ENCODE measurements at regions of chr12 and their contacts with region 1.

Region 1: DNA sequence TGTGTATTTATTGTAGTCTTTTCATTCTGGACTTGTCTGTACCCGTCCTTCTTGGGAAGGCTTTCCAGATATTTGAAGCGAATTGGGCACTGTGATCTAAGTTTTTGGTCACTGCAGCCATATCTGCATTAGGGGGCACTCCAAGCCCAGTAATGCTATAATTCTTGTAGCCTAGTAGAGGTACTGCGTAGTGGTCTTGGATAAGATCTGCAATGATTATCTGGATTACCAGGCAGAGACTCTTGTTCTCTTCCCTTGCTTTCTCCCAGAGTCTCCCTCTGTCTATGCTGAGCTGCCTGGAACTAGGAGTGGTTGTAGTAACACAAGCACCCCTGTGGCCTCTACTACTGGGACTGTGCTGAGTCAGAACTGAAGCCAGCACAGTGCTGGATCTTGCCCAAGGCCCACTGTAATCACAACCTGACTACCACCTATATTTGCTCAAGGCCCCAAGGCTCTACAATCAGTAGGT is 30.0 kb downstream of the SLC38A2 start:
- DNase-seq: peak in 10 of 14 experiments; percentile 2 to 67 (median 24)
- ATAC-seq: peak; percentile 60
- H3K4me3 ChIP-seq: no peak overlapping the region
- H3K4me3 Mint-ChIP-seq: no peak overlapping the region
- H3K27ac ChIP-seq: no peak overlapping the region
- H3K27ac Mint-ChIP-seq: no peak overlapping the region
- H3K4me1 ChIP-seq: no peaks in the 10 kb centered on the region
- H3K4me1 Mint-ChIP-seq: no peaks in the 10 kb centered on the region
- H3K27me3 ChIP-seq: no peaks in the 10 kb centered on the region
- H3K27me3 Mint-ChIP-seq: no peaks in the 10 kb centered on the region
- CTCF ChIP-seq: peak; percentile 78

Region 2: GRCh38 chr12:46661110-46661845 is 318.7 kb after region 1 on chr12:
- CTCF ChIA-PET with region 1: interaction called, 5 read pairs
- POLR2A ChIA-PET with region 1: no interaction called
- intact Hi-C with region 1: loop called in 1 of 2 experiments (anchors 5 kb)
- DNase-seq: peak in 4 of 14 experiments; percentile 19 to 72 (median 70)
- ATAC-seq: peak; percentile 88
- H3K4me3 ChIP-seq: no peak overlapping the region
- H3K4me3 Mint-ChIP-seq: no peak overlapping the region
- H3K27ac ChIP-seq: no peak overlapping the region
- H3K27ac Mint-ChIP-seq: no peak overlapping the region
- H3K4me1 ChIP-seq: no peaks in the 10 kb centered on the region
- H3K4me1 Mint-ChIP-seq: peaks cover 32% of the 10 kb centered on the region
- H3K27me3 ChIP-seq: no peaks in the 10 kb centered on the region
- H3K27me3 Mint-ChIP-seq: no peaks in the 10 kb centered on the region
- CTCF ChIP-seq: peak; percentile 65

Region 3: DNA sequence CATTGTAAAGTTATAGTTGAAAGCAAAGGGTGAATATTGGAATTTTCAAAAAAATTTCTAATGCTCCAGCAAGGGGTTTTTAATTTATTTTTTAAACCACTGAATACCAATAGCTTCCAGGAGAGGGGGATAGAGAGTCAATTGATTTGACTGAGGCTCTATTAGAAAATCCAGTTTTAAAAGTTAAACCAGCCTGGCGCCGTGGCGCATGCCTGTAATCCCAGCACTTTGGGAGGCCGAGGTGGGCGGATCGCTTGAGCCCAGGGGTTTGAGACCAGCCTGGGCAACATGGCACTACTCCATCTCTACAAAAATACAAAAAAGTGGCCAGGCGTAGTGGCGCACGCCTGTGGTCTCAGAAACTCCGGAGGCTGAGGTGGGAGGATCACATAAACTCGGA is 333.1 kb after region 1 on chr12:
- CTCF ChIA-PET with region 1: no interaction called
- POLR2A ChIA-PET with region 1: no interaction called
- intact Hi-C with region 1: loop called (anchors 2 to 5 kb)
- DNase-seq: peak in 3 of 14 experiments; percentile 28 to 40 (median 36)
- ATAC-seq: no peak
- H3K4me3 ChIP-seq: no peak overlapping the region
- H3K4me3 Mint-ChIP-seq: no peak overlapping the region
- H3K27ac ChIP-seq: no peak overlapping the region
- H3K27ac Mint-ChIP-seq: no peak overlapping the region
- H3K4me1 ChIP-seq: no peaks in the 10 kb centered on the region
- H3K4me1 Mint-ChIP-seq: no peaks in the 10 kb centered on the region
- H3K27me3 ChIP-seq: no peaks in the 10 kb centered on the region
- H3K27me3 Mint-ChIP-seq: no peaks in the 10 kb centered on the region
- CTCF ChIP-seq: peak; percentile 59

Region 4: DNA sequence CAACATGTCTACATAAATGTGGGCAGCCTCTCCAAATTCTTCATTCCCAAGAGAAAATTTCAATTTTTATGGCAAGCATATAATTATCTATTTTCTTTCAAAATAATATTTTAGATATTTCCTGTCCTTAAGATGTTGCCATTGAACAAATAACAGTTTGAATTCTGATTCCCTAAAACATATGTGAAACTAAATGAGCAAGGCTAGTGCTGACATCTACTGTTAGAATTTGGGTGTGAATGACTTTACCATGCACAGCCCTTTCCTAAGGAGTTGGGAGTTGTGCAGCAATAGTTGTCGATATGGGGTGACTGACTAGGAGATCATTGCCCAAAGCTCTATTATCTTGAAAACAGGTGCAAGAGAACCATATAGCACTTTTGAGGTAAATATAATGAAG is 591.3 kb after region 1 on chr12:
- CTCF ChIA-PET with region 1: no interaction called
- POLR2A ChIA-PET with region 1: no interaction called
- intact Hi-C with region 1: loop called in 1 of 2 experiments (anchors 2 kb)
- DNase-seq: peak in 3 of 14 experiments; percentile 23 to 37 (median 34)
- ATAC-seq: no peak
- H3K4me3 ChIP-seq: no peak overlapping the region
- H3K4me3 Mint-ChIP-seq: no peak overlapping the region
- H3K27ac ChIP-seq: no peak overlapping the region
- H3K27ac Mint-ChIP-seq: no peak overlapping the region
- H3K4me1 ChIP-seq: no peaks in the 10 kb centered on the region
- H3K4me1 Mint-ChIP-seq: no peaks in the 10 kb centered on the region
- H3K27me3 ChIP-seq: no peaks in the 10 kb centered on the region
- H3K27me3 Mint-ChIP-seq: peaks cover 19% of the 10 kb centered on the region
- CTCF ChIP-seq: no peak

Region 5: GRCh38 chr12:46983393-46984266 is 641.0 kb after region 1 on chr12:
- CTCF ChIA-PET with region 1: no interaction called
- POLR2A ChIA-PET with region 1: no interaction called
- intact Hi-C with region 1: loop called (anchors 1 to 5 kb)
- DNase-seq: peak in 12 of 14 experiments; percentile 2 to 60 (median 18)
- ATAC-seq: peak; percentile 74
- H3K4me3 ChIP-seq: no peak overlapping the region
- H3K4me3 Mint-ChIP-seq: no peak overlapping the region
- H3K27ac ChIP-seq: no peak overlapping the region
- H3K27ac Mint-ChIP-seq: no peak overlapping the region
- H3K4me1 ChIP-seq: peaks cover 10% of the 10 kb centered on the region
- H3K4me1 Mint-ChIP-seq: peaks cover 7% of the 10 kb centered on the region
- H3K27me3 ChIP-seq: peaks cover 2 to 7% of the 10 kb centered on the region in 2 experiments
- H3K27me3 Mint-ChIP-seq: peaks cover 20% of the 10 kb centered on the region
- CTCF ChIP-seq: peak; percentile 53

Region 6: GRCh38 chr12:47021298-47021697 is 678.7 kb after region 1 on chr12:
- CTCF ChIA-PET with region 1: interaction called, 10 read pairs
- POLR2A ChIA-PET with region 1: no interaction called
- intact Hi-C with region 1: loop called (anchors 1 kb)
- DNase-seq: peak in 3 of 14 experiments; percentile 57 to 72 (median 67)
- ATAC-seq: peak; percentile 39
- H3K4me3 ChIP-seq: no peak overlapping the region
- H3K4me3 Mint-ChIP-seq: no peak overlapping the region
- H3K27ac ChIP-seq: no peak overlapping the region
- H3K27ac Mint-ChIP-seq: no peak overlapping the region
- H3K4me1 ChIP-seq: no peaks in the 10 kb centered on the region
- H3K4me1 Mint-ChIP-seq: no peaks in the 10 kb centered on the region
- H3K27me3 ChIP-seq: no peaks in the 10 kb centered on the region
- H3K27me3 Mint-ChIP-seq: peaks cover 20% of the 10 kb centered on the region
- CTCF ChIP-seq: peak; percentile 83

Region 7: GRCh38 chr12:47686645-47687240 is 1344.1 kb after region 1 on chr12:
- CTCF ChIA-PET with region 1: no interaction called
- POLR2A ChIA-PET with region 1: no interaction called
- intact Hi-C with region 1: loop called in 1 of 2 experiments (anchors 10 kb)
- DNase-seq: peak in 6 of 14 experiments; percentile 1 to 61 (median 31)
- ATAC-seq: peak; percentile 76
- H3K4me3 ChIP-seq: no peak overlapping the region
- H3K4me3 Mint-ChIP-seq: no peak overlapping the region
- H3K27ac ChIP-seq: no peak overlapping the region
- H3K27ac Mint-ChIP-seq: no peak overlapping the region
- H3K4me1 ChIP-seq: no peaks in the 10 kb centered on the region
- H3K4me1 Mint-ChIP-seq: peaks cover 10% of the 10 kb centered on the region
- H3K27me3 ChIP-seq: no peaks in the 10 kb centered on the region
- H3K27me3 Mint-ChIP-seq: no peaks in the 10 kb centered on the region
- CTCF ChIP-seq: peak; percentile 58

Measured in CD4-positive, alpha-beta T cell (primary cell).